Colonic mucosa (tissue), 4 donors: ENCODE measurements at regions of chr12 and their contacts with region 1.

Region 1: GRCh38 chr12:12999959-13000615 is at the start of gene HEBP1:
- DNase-seq: peak; percentile 98
- H3K4me3 ChIP-seq: peak within 1 kb of the TSS; percentile 58
- H3K27ac ChIP-seq: peak within 1 kb of the TSS; percentile 85
- H3K4me1 ChIP-seq: no peaks in the 10 kb centered on the region
- H3K27me3 ChIP-seq: no peaks in the 10 kb centered on the region
- CTCF ChIP-seq: no peak
- total RNA-seq, gene HEBP1: 40.9 to 61.9 TPM

Region 2: GRCh38 chr12:13044002-13044905 is 44.2 kb after region 1 on chr12 and contains the start of gene FAM234B:
- intact Hi-C with region 1: loop called (anchors 5 kb)
- DNase-seq: peak; percentile 74
- H3K4me3 ChIP-seq: peak within 1 kb of the TSS; percentile 80
- H3K27ac ChIP-seq: no peak within 1 kb of the TSS
- H3K4me1 ChIP-seq: peaks cover 8% of the 10 kb centered on the region
- H3K27me3 ChIP-seq: peaks cover 30% of the 10 kb centered on the region
- CTCF ChIP-seq: no peak
- total RNA-seq, gene FAM234B: 1.5 to 2.0 TPM

Region 3: DNA sequence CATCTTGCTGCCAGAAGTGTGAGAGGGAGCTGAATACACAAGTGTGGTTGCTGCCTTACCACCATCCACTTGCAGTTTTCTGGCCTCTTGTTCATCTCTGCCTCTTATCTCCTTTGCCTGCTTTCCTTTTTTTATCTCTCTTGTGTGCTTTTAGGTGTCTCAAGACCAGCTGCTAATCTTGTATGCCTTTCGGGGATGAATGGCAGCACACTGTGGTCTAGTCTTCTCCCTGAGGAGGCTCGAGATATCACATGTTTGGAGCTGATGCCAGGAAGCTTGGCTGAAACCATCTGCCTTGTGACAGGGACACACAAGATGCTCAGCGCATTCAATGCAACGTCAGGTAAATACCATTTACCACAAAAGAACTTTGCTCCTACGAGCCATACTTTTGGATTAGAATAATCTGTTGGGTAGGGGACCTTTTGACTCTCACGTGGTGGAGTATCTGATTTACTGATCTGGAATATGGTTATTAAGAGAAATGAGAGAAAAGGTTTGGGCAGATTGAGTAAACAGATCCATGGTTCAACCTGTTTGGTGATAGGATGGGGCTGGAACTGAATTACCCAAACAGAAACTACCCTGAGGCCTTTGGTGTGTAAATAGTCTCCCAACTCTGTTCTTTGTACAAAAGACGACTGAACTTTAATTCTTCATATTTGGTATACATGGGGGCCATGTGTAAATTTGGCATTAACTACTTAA is 61.5 kb after region 1 on chr12:
- intact Hi-C with region 1: no loop called
- DNase-seq: no peak
- H3K4me3 ChIP-seq: no peak overlapping the region
- H3K27ac ChIP-seq: no peak overlapping the region
- H3K4me1 ChIP-seq: no peaks in the 10 kb centered on the region
- H3K27me3 ChIP-seq: no peaks in the 10 kb centered on the region
- CTCF ChIP-seq: no peak

Region 4: DNA sequence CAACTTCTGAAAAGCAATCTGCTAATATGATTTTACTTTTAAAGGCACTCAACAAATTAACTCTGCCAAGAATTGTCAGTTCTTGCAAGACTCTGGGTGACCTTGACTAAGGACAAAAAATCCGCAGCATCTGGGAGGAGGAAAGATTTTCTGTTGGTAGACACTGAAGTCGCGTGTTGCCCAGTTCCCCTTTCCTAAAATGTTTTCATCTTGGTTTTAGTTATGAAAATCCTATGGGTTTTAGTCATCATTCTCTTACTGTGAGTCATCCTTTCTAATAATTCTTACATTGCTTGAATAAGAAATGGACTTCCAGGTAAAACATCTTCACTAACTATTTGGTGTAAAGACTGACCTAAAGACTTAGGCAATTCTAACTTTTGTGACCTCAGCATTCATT is 94.3 kb after region 1 on chr12:
- intact Hi-C with region 1: loop called (anchors 10 kb)
- DNase-seq: no peak
- H3K4me3 ChIP-seq: no peak overlapping the region
- H3K27ac ChIP-seq: no peak overlapping the region
- H3K4me1 ChIP-seq: peaks cover 8% of the 10 kb centered on the region
- H3K27me3 ChIP-seq: no peaks in the 10 kb centered on the region
- CTCF ChIP-seq: no peak